ENCODE measurements at regions of chr9 and their contacts with region 1.

Region 1: GRCh38 chr9:14831074-14831473 is 79.2 kb downstream of the FREM1 start:
- DNase-seq: no peak
- ATAC-seq: no peak
- H3K4me3 ChIP-seq: no peak overlapping the region
- H3K27ac ChIP-seq: no peak overlapping the region
- H3K4me1 ChIP-seq: no peaks in the 10 kb centered on the region
- H3K27me3 ChIP-seq: no peaks in the 10 kb centered on the region
- CTCF ChIP-seq: no peak

Region 2: DNA sequence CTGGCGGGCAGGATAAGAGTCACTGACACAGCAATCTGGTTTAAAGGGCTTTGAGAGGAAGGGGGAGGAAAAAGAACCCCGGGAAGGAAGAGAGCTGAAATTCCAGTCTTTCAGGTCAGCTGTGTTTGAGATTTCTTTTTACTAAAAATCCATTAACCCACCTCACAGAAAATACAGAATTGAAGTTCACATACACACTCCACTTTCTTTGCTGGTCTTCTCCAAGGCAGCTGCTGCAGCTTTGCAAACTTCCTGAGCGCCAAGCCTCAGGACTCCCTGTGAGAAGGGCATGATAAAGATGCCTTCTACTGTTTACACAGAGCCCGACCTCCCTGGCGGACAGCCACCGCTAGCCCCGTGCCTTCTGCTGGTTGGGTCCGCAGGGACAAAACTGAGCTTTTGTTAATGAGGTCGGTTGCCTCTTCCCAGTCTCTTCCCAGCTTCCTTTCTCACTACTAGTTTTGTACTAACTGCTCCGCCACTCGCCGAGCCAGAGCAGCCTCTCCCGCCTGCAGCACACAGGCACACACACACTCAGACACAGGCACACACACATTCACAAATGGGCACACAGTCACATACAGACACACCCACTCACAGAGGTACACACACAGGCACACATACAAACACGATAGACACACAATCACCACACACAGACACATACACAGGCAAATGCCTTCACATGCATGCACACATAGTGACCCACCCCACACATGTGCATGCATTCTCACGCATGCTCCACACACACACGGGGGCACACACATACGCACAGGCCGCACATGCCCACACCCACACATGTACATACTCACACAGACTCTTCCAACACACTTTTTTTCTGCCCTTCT is 79.1 kb after region 1 on chr9 and contains the start of gene FREM1:
- intact Hi-C with region 1: no loop called
- DNase-seq: peak; percentile 11 to 62 (median 38)
- ATAC-seq: peak; percentile 34 to 56 (median 49)
- H3K4me3 ChIP-seq: peak within 1 kb of the TSS in 2 of 4 donors; percentile 30 to 33
- H3K27ac ChIP-seq: peak within 1 kb of the TSS; percentile 25 to 76 (median 48)
- H3K4me1 ChIP-seq: peaks cover 48 to 73% (median 73%) of the 10 kb centered on the region in 3 donors
- H3K27me3 ChIP-seq: no peaks in the 10 kb centered on the region
- CTCF ChIP-seq: no peak
- total RNA-seq, gene FREM1: 4.6 to 19.8 (median 7.4) TPM

Region 3: GRCh38 chr9:15135164-15135792 is 304.2 kb after region 1 on chr9:
- intact Hi-C with region 1: loop called in 1 of 3 experiments (anchors 10 kb)
- DNase-seq: peak in 4 of 6 donors; percentile 24 to 71 (median 30)
- ATAC-seq: peak; percentile 86 to 100 (median 97)
- H3K4me3 ChIP-seq: no peak overlapping the region
- H3K27ac ChIP-seq: no peak overlapping the region
- H3K4me1 ChIP-seq: no peaks in the 10 kb centered on the region
- H3K27me3 ChIP-seq: no peaks in the 10 kb centered on the region
- CTCF ChIP-seq: peak; percentile 81 to 90 (median 86)